ENCODE measurements at regions of chr6 and their contacts with region 1.

Region 1: DNA sequence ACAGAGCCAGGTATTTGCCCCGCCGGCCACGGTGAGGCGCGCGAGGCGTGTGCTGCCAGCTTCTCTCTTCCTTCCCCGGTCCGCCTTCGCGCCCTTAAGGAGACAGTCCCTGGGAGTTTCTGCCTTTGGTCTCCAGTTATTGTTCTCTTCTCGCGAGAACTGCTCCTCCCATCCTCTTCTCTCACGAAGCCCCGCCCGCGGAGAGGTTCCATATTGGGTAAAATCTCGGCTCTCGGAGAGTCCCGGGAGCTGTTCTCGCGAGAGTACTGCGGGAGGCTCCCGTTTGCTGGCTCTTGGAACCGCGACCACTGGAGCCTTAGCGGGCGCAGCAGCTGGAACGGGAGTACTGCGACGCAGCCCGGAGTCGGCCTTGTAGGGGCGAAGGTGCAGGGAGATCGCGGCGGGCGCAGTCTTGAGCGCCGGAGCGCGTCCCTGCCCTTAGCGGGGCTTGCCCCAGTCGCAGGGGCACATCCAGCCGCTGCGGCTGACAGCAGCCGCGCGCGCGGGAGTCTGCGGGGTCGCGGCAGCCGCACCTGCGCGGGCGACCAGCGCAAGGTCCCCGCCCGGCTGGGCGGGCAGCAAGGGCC is at the start of gene MAPK14:
- DNase-seq: peak; percentile 98 to 100 (median 99)
- ATAC-seq: peak; percentile 90 to 94 (median 92)
- H3K4me3 ChIP-seq: peak within 1 kb of the TSS; percentile 92 to 99 (median 98)
- H3K27ac ChIP-seq: peak within 1 kb of the TSS; percentile 88 to 95 (median 93)
- H3K4me1 ChIP-seq: peaks cover 3 to 23% (median 20%) of the 10 kb centered on the region in 3 donors
- H3K27me3 ChIP-seq: no peaks in the 10 kb centered on the region
- CTCF ChIP-seq: peak; percentile 58 to 84 (median 74)
- total RNA-seq, gene MAPK14: 13.3 to 29.9 (median 18.7) TPM

Region 2: GRCh38 chr6:36083446-36083845 is 55.9 kb after region 1 on chr6:
- intact Hi-C with region 1: no loop called
- DNase-seq: no peak
- ATAC-seq: no peak
- H3K4me3 ChIP-seq: no peak overlapping the region
- H3K27ac ChIP-seq: no peak overlapping the region
- H3K4me1 ChIP-seq: no peaks in the 10 kb centered on the region
- H3K27me3 ChIP-seq: no peaks in the 10 kb centered on the region
- CTCF ChIP-seq: no peak

Region 3: DNA sequence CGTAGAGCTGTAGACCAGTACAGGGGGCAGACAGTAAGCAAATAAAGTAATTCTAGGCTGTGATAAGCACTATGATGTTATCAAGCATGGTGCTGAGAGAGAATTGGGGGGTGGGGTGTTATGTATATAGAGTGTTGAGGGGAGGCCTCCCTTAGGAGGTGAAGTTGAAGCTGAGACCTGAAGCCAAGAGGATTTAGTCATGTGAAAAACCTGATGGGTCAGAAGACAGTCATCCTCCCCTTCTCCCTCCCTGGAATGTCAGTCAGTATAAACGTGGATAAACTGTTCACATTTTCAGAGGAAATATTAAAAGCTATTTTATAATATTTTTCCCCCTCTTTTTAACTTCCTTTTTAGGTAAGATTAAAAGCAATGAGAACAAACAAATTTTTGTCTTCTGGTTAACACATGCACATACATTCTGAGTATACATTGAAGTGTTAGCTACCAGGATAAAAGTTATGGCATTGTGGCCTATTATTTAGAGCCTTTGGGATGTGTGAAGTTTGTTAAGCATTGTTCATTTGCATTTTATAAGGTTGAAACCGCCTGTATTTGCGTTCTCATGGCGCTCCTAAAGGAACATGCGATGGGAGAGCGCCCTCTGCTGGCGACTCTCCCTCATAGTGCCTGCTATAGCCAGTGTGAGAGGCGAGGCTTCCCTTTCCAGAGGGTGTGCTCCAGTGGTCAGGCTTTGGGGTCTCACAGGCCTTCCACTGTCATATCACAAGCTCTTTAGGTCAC is 67.3 kb after region 1 on chr6:
- intact Hi-C with region 1: loop called in 2 of 3 experiments (anchors 2 to 10 kb)
- DNase-seq: peak; percentile 62 to 94 (median 80)
- ATAC-seq: peak; percentile 95 to 97 (median 96)
- H3K4me3 ChIP-seq: no peak overlapping the region
- H3K27ac ChIP-seq: no peak overlapping the region
- H3K4me1 ChIP-seq: no peaks in the 10 kb centered on the region
- H3K27me3 ChIP-seq: no peaks in the 10 kb centered on the region
- CTCF ChIP-seq: peak; percentile 86 to 95 (median 90)